Activated CD4-positive, alpha-beta memory T cell treated with anti-CD3 and anti-CD28 coated beads for 36 hours (primary cell): ENCODE measurements at regions of chr5 and their contacts with region 1.

Region 1: GRCh38 chr5:113513384-113514288 is at the start of gene YTHDC2:
- DNase-seq: peak; percentile 93
- H3K4me3 Mint-ChIP-seq: peak within 1 kb of the TSS; percentile 90
- H3K27ac Mint-ChIP-seq: peak within 1 kb of the TSS; percentile 79
- H3K4me1 Mint-ChIP-seq: peaks cover 28% of the 10 kb centered on the region
- H3K27me3 Mint-ChIP-seq: peaks cover 7% of the 10 kb centered on the region
- total RNA-seq, gene YTHDC2: 27.3 to 28.9 TPM

Region 2: GRCh38 chr5:112860929-112861637 is 652.6 kb before region 1 on chr5 and contains the start of gene SRP19:
- CTCF ChIA-PET with region 1: interaction called, 3 read pairs
- POLR2A ChIA-PET with region 1: no interaction called
- intact Hi-C with region 1: loop called (anchors 1 kb)
- DNase-seq: peak; percentile 95
- H3K4me3 Mint-ChIP-seq: peak within 1 kb of the TSS; percentile 86
- H3K27ac Mint-ChIP-seq: peak within 1 kb of the TSS; percentile 95
- H3K4me1 Mint-ChIP-seq: peaks cover 33% of the 10 kb centered on the region
- H3K27me3 Mint-ChIP-seq: peaks cover 3% of the 10 kb centered on the region
- total RNA-seq, gene SRP19: 49.1 to 51.6 TPM

Region 3: GRCh38 chr5:113123618-113124017 is 390.0 kb before region 1 on chr5:
- CTCF ChIA-PET with region 1: no interaction called
- POLR2A ChIA-PET with region 1: no interaction called
- intact Hi-C with region 1: no loop called
- DNase-seq: no peak
- H3K4me3 Mint-ChIP-seq: no peak overlapping the region
- H3K27ac Mint-ChIP-seq: no peak overlapping the region
- H3K4me1 Mint-ChIP-seq: no peaks in the 10 kb centered on the region
- H3K27me3 Mint-ChIP-seq: no peaks in the 10 kb centered on the region

Region 4: DNA sequence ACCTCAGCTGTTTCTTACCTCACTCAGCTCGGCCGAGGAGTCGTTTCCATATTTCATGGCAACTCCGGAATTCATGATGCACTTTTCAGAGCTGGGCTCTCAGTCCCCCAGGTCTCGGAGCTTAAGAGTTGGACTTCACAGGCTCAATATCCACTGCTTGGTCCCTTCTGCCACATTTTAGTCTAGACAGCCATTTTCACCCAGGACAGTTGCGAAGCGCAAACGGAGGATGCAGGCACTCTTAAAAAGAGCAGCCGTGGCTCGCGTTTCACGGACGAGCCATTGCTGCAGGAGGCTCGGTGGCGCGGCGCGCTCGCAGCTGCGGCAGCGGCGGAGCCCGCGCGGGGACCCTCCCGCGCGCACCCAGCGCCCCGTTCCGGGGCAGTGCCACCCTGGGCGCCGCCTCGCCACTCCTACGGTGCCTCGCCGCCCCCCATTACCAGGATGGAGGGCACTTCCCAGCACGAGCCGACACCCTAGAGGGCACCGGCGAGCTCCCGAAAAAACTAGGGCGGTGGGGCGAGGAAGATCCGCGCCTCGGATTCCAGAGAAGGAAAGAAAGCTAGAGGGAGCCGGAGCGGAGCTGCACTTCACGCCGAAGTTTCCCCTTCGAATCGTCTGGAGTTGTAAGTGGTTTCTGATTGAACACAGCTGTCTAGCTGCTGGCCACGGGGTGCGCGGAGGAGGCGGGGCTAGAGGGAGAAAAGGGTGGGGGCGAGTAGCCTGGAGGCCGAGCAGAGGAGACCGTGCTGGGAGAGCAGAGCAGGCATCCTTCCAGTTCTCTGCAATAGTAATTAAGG is 219.1 kb before region 1 on chr5:
- CTCF ChIA-PET with region 1: interaction called, 4 read pairs
- POLR2A ChIA-PET with region 1: no interaction called
- intact Hi-C with region 1: loop called (anchors 2 kb)
- DNase-seq: peak; percentile 88
- H3K4me3 Mint-ChIP-seq: peak overlapping the region; percentile 89
- H3K27ac Mint-ChIP-seq: peak overlapping the region; percentile 55
- H3K4me1 Mint-ChIP-seq: peaks cover 16% of the 10 kb centered on the region
- H3K27me3 Mint-ChIP-seq: peaks cover 13% of the 10 kb centered on the region

Region 5: GRCh38 chr5:113378959-113379541 is 134.6 kb before region 1 on chr5:
- CTCF ChIA-PET with region 1: interaction called, 24 read pairs
- POLR2A ChIA-PET with region 1: no interaction called
- intact Hi-C with region 1: loop called (anchors 1 kb)
- DNase-seq: peak; percentile 74
- H3K4me3 Mint-ChIP-seq: no peak overlapping the region
- H3K27ac Mint-ChIP-seq: no peak overlapping the region
- H3K4me1 Mint-ChIP-seq: peaks cover 27% of the 10 kb centered on the region
- H3K27me3 Mint-ChIP-seq: peaks cover 5% of the 10 kb centered on the region

Region 6: GRCh38 chr5:113606298-113607134 is 92.9 kb after region 1 on chr5:
- CTCF ChIA-PET with region 1: interaction called, 5 read pairs
- POLR2A ChIA-PET with region 1: no interaction called
- intact Hi-C with region 1: loop called (anchors 5 kb)
- DNase-seq: peak; percentile 44
- H3K4me3 Mint-ChIP-seq: no peak overlapping the region
- H3K27ac Mint-ChIP-seq: no peak overlapping the region
- H3K4me1 Mint-ChIP-seq: peaks cover 3% of the 10 kb centered on the region
- H3K27me3 Mint-ChIP-seq: peaks cover 12% of the 10 kb centered on the region